Thyroid gland (tissue), 4 donors: ENCODE measurements at regions of chr2 and their contacts with region 1.

Region 1: DNA sequence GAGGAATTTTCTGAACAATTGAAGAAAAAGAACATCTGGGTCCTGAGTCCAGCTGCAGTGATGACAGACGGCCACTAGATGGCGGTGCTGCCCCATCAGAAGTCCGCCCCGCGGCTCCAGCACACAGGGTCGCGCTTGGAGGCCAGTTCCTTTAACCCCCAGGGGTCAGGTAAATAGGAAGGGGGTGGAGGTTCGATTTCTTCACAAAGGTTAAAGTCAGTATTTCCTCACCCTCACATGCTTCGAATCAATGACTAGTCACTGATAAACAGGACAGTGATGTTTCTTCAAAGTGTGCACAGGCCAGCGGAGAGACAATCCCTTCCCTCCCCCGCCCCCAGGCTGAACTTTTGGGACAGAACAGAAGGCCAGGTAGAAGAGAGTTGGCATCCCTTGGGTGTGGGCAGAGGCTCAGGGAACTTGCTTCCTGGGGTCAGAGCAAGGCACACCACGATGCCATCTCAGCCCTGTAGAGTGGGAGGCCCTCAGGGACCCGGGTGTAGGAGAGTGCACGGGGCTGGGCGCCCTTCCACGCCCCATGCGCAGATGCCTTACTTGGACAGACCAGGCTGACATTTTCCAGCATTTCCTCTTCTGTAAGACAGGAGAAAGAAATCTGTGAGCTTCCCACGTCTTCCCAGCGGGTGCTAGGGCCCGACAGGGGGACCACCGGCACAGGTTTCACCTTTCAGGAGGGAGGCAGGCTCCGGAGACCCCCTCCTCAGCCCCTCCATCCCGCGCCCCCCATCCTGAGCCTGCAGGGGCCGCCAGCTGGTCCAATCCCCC is 722 bp downstream of the APOB start:
- DNase-seq: peak; percentile 45 to 58
- H3K4me3 ChIP-seq: no peak overlapping the region
- H3K27ac ChIP-seq: no peak overlapping the region
- H3K4me1 ChIP-seq: peaks cover 4 to 15% of the 10 kb centered on the region in 2 donors
- H3K27me3 ChIP-seq: no peaks in the 10 kb centered on the region
- CTCF ChIP-seq: peak; percentile 75 to 98 (median 92)
- POLR2A ChIP-seq: no peak

Region 2: DNA sequence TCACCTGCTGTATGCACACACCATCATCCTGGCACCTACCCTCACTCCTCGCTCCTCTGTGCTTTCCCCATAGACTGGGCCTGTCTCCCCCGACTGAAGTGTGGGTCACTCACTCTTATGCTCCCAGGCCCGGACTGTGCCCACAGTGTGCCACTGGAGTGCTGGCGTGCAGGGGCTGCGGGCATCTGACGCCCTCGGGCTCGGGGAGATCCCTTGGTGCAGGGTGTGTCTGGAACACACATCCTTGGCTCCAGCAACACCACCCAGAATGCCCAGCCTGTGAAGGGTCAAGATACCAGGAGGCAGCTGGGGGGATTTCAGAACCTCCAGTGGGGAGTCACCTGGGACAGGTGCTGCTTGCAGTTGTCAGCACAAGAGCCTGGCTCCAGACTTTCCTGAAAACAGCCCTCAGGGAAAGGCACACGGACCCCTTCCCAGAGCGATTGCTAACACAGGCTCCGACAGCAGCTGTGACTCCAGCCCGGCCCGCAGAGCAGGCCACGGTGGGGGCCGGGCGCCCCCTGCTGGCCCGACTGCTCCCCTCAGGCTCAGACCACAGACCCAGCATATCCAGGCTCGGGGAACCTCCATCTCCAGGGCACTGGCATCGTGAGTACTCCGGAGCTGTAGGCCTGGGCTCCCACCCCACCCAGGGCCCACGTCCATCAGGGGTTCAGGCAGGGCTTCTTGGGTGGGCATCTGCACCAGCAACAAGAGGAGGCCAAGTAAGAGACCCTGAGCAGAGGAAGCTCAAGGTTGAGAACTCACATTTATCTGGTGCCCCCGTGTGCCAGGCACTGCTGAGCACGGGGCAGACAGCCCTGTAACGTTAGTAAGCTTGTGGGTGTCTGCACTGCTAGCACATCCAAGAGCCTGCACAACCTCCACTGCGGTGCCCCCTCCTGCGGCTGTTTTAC is 400.8 kb before region 1 on chr2:
- intact Hi-C with region 1: no loop called
- DNase-seq: peak; percentile 70 to 74
- H3K4me3 ChIP-seq: no peak overlapping the region
- H3K27ac ChIP-seq: no peak overlapping the region
- H3K4me1 ChIP-seq: peaks cover 4 to 23% of the 10 kb centered on the region in 2 donors
- H3K27me3 ChIP-seq: no peaks in the 10 kb centered on the region
- CTCF ChIP-seq: peak; percentile 69 to 94 (median 89)
- POLR2A ChIP-seq: no peak

Region 3: GRCh38 chr2:20852139-20852538 is 191.0 kb before region 1 on chr2:
- intact Hi-C with region 1: no loop called
- DNase-seq: no peak
- H3K4me3 ChIP-seq: no peak overlapping the region
- H3K27ac ChIP-seq: no peak overlapping the region
- H3K4me1 ChIP-seq: no peaks in the 10 kb centered on the region
- H3K27me3 ChIP-seq: no peaks in the 10 kb centered on the region
- CTCF ChIP-seq: no peak
- POLR2A ChIP-seq: no peak

Region 4: GRCh38 chr2:20925265-20925889 is 117.8 kb before region 1 on chr2:
- intact Hi-C with region 1: no loop called
- DNase-seq: no peak
- H3K4me3 ChIP-seq: no peak overlapping the region
- H3K27ac ChIP-seq: no peak overlapping the region
- H3K4me1 ChIP-seq: no peaks in the 10 kb centered on the region
- H3K27me3 ChIP-seq: no peaks in the 10 kb centered on the region
- CTCF ChIP-seq: no peak
- POLR2A ChIP-seq: no peak

Region 5: DNA sequence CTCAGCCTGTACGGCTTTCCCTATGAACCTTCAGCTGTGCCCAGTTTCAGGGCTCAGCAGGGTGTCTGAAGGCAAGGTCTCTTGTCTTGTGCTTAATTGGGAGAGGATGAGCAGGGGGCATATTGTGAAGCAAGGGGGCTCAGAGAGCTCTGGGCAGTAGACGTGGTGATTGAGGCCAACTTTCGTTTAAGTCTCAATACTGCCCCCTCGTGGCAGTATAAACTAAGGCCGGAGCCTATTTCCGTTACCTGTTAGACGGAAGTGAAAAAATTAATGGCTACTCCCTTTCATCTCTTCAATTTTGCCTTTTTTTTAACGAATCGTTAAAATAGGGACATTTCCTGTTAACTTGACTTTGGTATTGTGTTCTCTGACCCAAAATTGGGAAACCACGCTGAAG is 274.0 kb after region 1 on chr2:
- intact Hi-C with region 1: loop called (anchors 5 kb)
- DNase-seq: peak; percentile 13 to 28
- H3K4me3 ChIP-seq: no peak overlapping the region
- H3K27ac ChIP-seq: no peak overlapping the region
- H3K4me1 ChIP-seq: no peaks in the 10 kb centered on the region
- H3K27me3 ChIP-seq: no peaks in the 10 kb centered on the region
- CTCF ChIP-seq: peak in 2 of 6 experiments; percentile 44 to 48
- POLR2A ChIP-seq: no peak